Endothelial cell of umbilical vein (primary cell): ENCODE measurements at regions of chr19 and their contacts with region 1.

Region 1: DNA sequence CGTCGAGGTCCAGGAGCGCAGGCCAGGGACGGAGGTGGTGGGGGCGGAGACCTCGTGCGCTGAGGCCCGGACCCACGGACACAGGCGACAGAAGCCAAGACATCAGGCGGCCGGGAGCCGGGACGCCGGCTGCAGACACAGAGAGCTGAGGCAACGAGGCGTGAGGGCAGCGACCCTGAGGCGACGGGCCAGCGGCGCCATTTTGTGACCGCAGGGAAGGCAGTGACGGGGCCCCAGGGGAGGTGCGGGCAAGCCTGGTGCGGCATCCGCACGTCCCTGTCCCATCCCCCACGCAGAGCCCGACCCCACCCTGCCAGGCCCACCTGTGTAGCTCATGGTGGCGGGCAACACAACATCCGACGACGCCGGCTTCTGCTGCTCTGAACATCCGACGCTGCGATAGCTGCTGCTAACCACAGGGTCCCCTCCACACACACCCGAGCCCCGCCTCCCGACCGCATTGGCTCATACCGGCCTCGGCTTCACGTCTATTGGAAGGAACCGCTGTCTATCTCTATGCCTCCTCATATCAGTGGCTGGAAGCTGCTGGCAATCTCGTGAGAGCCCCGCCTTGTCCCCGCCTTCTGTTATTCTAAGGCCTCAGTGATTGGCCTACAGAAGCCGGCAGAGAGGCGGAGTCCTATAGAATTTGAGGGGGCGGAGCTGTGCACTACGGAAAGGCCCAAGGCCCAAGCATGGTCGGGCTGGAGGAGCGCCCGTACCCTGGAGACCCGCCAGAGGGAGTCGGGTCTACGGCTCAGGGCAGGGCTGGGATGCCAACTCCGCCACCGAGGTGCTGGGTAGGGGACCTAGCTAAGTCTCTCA is at the start of gene AKAP8L:
- DNase-seq: peak; percentile 100
- H3K4me3 ChIP-seq: peak within 1 kb of the TSS; percentile 72 to 85 (median 85)
- H3K27ac ChIP-seq: peak within 1 kb of the TSS; percentile 62
- H3K4me1 ChIP-seq: peaks cover 14% of the 10 kb centered on the region
- H3K27me3 ChIP-seq: no peaks in the 10 kb centered on the region
- CTCF ChIP-seq: peak; percentile 76 to 90
- POLR2A ChIP-seq: peak; percentile 93
- total RNA-seq, gene AKAP8L: 95.4 and 99.6 TPM in 2 replicates

Region 2: GRCh38 chr19:15107061-15108010 is 311.5 kb before region 1 on chr19 and contains the start of gene SYDE1:
- CTCF ChIA-PET with region 1: no interaction called
- POLR2A ChIA-PET with region 1: no interaction called
- dilution Hi-C with region 1: no loop called
- intact Hi-C with region 1: loop called (anchors 5 kb)
- DNase-seq: peak; percentile 26
- H3K4me3 ChIP-seq: peak within 1 kb of the TSS; percentile 82 to 93 (median 93)
- H3K27ac ChIP-seq: peak within 1 kb of the TSS; percentile 60
- H3K4me1 ChIP-seq: peaks cover 8% of the 10 kb centered on the region
- H3K27me3 ChIP-seq: no peaks in the 10 kb centered on the region
- CTCF ChIP-seq: no peak
- POLR2A ChIP-seq: peak; percentile 75
- total RNA-seq, gene SYDE1: 35.3 and 38.2 TPM in 2 replicates

Region 3: GRCh38 chr19:15251749-15252397 is 166.9 kb before region 1 on chr19:
- CTCF ChIA-PET with region 1: no interaction called
- POLR2A ChIA-PET with region 1: no interaction called
- dilution Hi-C with region 1: no loop called
- intact Hi-C with region 1: loop called (anchors 5 kb)
- DNase-seq: peak; percentile 73
- H3K4me3 ChIP-seq: no peak overlapping the region
- H3K27ac ChIP-seq: peak overlapping the region; percentile 69
- H3K4me1 ChIP-seq: peaks cover 42% of the 10 kb centered on the region
- H3K27me3 ChIP-seq: no peaks in the 10 kb centered on the region
- CTCF ChIP-seq: peak; percentile 56 to 60
- POLR2A ChIP-seq: no peak

Region 4: DNA sequence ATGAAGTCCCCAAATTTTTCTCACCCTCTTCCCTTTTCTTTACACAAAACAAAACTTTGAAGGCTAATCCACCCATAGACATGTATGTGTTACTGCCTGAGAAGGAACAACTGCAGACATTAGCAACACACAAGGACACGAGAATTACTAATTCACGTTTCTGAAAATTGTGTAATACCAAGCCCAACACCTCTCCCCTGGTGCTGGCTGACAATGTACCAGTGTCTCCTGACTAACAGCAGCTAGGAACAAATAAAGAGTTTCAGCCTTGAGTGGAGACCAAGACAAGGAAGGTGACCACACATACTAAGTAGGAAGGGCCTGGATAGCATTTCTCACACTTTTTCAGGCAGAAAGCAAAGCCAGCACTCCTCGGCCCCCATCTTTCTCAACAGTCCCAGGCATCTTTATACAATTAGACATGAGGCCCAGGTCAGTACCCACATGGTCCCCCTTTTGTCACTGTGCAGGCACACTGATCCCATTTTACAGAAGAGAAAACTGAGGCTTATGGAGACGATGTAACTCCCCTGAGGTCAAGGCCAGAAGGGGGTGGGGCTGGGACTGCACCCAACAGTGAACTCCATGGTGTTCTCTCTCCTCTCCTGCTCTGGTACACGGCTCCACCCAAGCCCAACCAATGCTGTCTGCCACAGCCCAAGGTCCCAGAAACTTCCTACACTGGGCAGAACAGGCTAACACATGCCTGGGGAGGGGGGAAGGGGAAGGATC is 95.1 kb before region 1 on chr19:
- CTCF ChIA-PET with region 1: no interaction called
- POLR2A ChIA-PET with region 1: no interaction called
- dilution Hi-C with region 1: no loop called
- intact Hi-C with region 1: no loop called
- DNase-seq: no peak
- H3K4me3 ChIP-seq: no peak overlapping the region
- H3K27ac ChIP-seq: no peak overlapping the region
- H3K4me1 ChIP-seq: peaks cover 25% of the 10 kb centered on the region
- H3K27me3 ChIP-seq: no peaks in the 10 kb centered on the region
- CTCF ChIP-seq: no peak
- POLR2A ChIP-seq: no peak

Region 5: DNA sequence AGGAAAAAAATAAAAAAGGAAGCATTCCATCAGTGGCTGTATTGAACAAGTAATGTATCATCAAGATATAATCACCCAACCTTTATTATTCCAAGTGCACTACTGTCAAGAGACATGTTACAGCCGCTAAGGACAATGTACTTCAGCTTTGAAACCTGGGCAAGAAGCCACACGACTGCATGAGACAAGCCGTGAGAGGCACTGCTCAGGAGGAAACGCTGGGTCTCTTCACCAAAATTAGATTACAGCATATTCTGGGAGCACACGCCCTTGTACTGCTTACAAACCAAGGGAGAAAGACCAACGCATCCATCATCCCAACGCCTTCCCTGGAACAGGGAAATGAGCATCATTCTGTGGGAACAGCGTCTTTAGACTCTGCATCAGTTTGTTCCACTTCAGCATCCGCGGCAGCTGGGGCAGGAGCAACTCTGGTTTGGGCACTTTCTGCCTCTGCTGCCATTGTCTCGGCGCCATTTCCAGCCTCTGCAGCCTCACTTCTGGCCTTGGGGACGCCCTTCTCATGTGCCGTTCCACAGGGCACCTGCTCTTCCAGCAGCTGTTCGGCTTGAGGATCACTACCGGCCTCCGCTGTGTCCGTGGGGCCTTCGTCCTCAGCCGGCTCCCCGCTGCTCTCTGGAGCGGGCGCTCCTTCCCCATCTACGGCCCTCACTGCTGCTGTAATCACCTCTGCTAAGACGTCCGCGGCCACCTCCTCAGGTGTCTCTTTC is 64.1 kb before region 1 on chr19:
- CTCF ChIA-PET with region 1: no interaction called
- POLR2A ChIA-PET with region 1: no interaction called
- dilution Hi-C with region 1: no loop called
- intact Hi-C with region 1: no loop called
- DNase-seq: no peak
- H3K4me3 ChIP-seq: no peak overlapping the region
- H3K27ac ChIP-seq: no peak overlapping the region
- H3K4me1 ChIP-seq: no peaks in the 10 kb centered on the region
- H3K27me3 ChIP-seq: no peaks in the 10 kb centered on the region
- CTCF ChIP-seq: no peak
- POLR2A ChIP-seq: peak; percentile 43

Region 6: GRCh38 chr19:15372470-15372869 is 46.3 kb before region 1 on chr19:
- CTCF ChIA-PET with region 1: no interaction called
- POLR2A ChIA-PET with region 1: no interaction called
- dilution Hi-C with region 1: no loop called
- intact Hi-C with region 1: no loop called
- DNase-seq: no peak
- H3K4me3 ChIP-seq: no peak overlapping the region
- H3K27ac ChIP-seq: no peak overlapping the region
- H3K4me1 ChIP-seq: peaks cover 10% of the 10 kb centered on the region
- H3K27me3 ChIP-seq: no peaks in the 10 kb centered on the region
- CTCF ChIP-seq: no peak
- POLR2A ChIP-seq: no peak

Region 7: DNA sequence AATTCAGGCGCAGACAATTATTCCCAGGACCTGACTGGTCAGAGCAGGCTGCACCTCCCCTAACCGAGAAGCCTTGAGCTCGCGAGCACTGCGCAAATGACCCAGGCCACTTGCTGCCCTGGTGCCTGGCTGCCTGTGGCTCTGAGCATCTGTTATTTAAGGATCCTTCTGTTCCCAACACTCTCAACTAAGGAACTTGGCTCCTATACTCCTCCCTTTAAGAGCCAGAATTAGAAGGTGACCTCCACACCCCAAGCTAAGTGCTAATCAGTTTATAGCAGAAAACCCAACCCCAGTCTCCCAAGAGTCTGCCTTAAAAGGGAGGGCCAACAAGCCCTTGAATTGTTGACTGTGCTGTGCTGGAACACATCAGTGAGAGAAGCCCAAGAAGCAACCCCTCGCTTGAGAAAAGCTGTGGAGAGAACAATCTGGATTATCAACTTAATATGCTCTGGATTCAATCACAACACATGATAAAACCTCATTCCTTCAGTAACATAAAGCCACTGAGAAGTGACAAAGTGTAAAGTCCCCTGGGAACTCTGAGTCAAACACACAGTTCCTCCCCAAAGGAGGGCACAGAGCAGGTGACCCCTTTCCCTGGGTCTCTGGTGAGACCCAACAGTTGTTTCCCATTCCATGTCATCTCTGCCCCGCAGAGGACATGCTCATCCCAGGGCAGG is 14.6 kb before region 1 on chr19:
- CTCF ChIA-PET with region 1: interaction called, 10 read pairs
- POLR2A ChIA-PET with region 1: interaction called, 5 read pairs
- dilution Hi-C with region 1: no loop called
- intact Hi-C with region 1: no loop called
- DNase-seq: no peak
- H3K4me3 ChIP-seq: no peak overlapping the region
- H3K27ac ChIP-seq: no peak overlapping the region
- H3K4me1 ChIP-seq: no peaks in the 10 kb centered on the region
- H3K27me3 ChIP-seq: no peaks in the 10 kb centered on the region
- CTCF ChIP-seq: no peak
- POLR2A ChIP-seq: no peak

Region 8: DNA sequence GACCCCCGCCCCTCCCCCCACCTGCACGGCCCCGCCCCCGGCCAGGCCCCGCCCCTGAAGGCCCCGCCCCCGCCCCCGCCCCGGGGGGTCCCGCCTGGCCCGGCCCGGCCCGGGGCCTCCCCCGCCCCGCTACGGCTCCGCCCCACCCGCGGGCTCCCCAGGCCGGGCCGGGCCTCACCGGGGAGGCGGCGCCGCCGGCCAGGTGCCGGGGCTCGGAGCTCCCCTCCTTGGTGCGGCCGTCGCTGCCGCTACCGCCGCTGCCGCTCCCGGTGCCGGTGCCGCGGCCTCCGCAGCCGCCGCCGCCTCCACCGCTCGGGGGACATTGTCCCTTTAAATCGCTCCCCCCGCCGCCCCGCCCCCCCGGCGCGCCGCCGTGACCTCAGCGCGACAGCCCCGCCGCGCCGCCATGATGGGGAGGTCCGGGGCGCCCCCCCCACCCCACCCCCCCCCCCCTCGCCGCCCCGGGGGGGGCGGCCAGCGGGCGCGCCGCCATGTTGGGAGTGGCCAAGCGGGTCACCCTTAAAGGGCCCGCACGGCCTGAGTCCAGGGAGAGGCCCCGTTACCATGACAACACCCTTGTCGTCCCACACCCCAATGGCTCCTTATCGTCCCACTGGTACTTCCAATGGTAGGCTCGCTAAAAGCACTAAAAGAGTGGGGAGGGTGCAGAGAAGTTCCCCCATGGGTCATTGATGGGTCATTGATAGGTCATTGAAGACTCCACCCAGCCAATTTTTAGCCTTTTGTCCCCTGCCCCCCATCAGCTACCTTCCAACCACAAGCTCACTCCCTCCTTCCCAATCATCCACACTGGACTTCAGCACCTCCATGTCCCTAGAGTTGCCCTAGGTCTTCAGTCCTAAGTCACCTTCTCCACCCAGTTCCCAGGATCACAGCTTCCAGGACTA is 31.1 kb after region 1 on chr19 and contains the start of gene WIZ:
- CTCF ChIA-PET with region 1: interaction called, 39 read pairs
- POLR2A ChIA-PET with region 1: interaction called, 11 read pairs
- dilution Hi-C with region 1: no loop called
- intact Hi-C with region 1: loop called (anchors 1 kb)
- DNase-seq: peak; percentile 56
- H3K4me3 ChIP-seq: peak within 1 kb of the TSS in 2 of 3 experiments; percentile 9 to 64
- H3K27ac ChIP-seq: no peak within 1 kb of the TSS
- H3K4me1 ChIP-seq: peaks cover 17% of the 10 kb centered on the region
- H3K27me3 ChIP-seq: no peaks in the 10 kb centered on the region
- CTCF ChIP-seq: no peak
- POLR2A ChIP-seq: no peak
- total RNA-seq, gene WIZ: 47.2 and 50.8 TPM in 2 replicates